ENCODE measurements at regions of chr6 and their contacts with region 1.

Region 1: DNA sequence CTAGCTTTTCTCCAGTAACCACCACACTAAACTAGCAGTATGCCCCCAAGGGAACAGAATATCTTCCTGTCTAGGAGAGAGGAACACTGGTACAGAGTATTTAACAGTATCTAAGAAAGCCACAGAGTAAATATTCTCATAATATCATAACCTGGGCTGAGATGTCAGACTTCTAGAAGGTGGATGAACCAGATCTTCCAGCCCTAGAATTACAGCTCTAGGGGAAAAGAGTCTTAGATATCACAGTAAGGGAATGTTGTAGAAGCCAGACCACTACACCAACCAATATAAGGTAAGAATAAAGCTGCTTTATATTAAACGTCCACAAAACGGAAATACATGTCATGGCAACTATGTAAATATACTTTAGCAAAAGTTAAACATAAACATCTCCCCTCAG is 12.4 kb downstream of the SERINC1 start:
- DNase-seq: no peak
- ATAC-seq: no peak
- H3K4me3 ChIP-seq: no peak overlapping the region
- H3K4me3 Mint-ChIP-seq: peak overlapping the region; percentile 32
- H3K27ac ChIP-seq: no peak overlapping the region
- H3K27ac Mint-ChIP-seq: peak overlapping the region; percentile 60
- H3K4me1 ChIP-seq: peaks cover 53% of the 10 kb centered on the region
- H3K4me1 Mint-ChIP-seq: peaks cover 86% of the 10 kb centered on the region
- H3K27me3 ChIP-seq: no peaks in the 10 kb centered on the region
- H3K27me3 Mint-ChIP-seq: no peaks in the 10 kb centered on the region
- CTCF ChIP-seq: no peak

Region 2: DNA sequence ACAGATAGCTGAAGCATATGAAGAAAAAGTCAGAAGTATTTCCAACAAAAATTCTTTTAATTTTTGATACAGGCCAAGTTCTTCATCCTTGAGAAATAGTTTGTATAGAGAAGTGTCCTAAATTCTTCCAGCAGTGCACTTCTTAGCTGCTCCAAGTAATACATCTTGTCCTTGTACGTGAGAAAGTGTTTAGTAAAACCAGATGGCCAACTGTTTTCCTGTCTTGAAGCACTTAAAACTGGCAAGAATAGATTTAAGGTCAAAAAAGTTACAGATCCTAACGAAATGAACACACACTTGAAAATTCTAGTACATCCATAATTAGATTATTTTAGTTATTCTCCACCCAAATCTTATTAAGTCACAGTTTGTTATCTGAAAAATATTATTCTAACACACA is 111.9 kb before region 1 on chr6:
- CTCF ChIA-PET with region 1: no interaction called
- POLR2A ChIA-PET with region 1: no interaction called
- intact Hi-C with region 1: no loop called
- DNase-seq: no peak
- ATAC-seq: no peak
- H3K4me3 ChIP-seq: no peak overlapping the region
- H3K4me3 Mint-ChIP-seq: no peak overlapping the region
- H3K27ac ChIP-seq: no peak overlapping the region
- H3K27ac Mint-ChIP-seq: no peak overlapping the region
- H3K4me1 ChIP-seq: no peaks in the 10 kb centered on the region
- H3K4me1 Mint-ChIP-seq: no peaks in the 10 kb centered on the region
- H3K27me3 ChIP-seq: no peaks in the 10 kb centered on the region
- H3K27me3 Mint-ChIP-seq: peaks cover 19% of the 10 kb centered on the region
- CTCF ChIP-seq: no peak

Region 3: DNA sequence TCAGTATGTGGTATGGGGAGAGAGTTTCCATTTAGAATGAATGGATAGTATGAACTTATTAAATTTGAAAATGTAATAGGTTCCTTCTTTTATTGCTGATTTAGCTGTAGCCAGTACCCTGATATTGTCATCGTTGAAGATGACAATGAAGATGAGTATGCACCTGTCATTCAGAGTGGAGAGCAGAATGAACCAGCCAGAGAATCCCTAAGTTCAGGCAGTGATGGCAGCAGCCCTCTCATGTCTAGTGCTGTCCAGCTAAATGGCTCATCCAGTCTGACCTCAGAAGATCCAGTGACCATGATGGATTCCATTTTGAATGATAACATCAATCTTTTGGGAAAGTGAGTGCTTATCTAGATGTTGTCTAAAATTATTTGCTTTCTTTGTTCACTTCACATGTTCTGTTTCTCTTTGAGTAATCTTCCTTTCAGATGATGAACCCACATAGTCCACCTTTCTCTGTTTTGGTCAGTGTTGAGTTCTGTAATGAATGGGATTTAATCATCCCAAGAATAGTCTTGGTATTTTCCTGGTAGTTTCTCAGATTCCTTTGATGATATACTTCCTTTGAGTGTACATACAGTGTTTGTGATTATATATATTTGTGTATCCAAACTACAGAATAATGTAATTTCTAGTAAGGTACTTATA is 36.5 kb before region 1 on chr6:
- CTCF ChIA-PET with region 1: no interaction called
- POLR2A ChIA-PET with region 1: interaction called, 3 read pairs
- intact Hi-C with region 1: loop called in 1 of 2 experiments (anchors 5 kb)
- DNase-seq: no peak
- ATAC-seq: no peak
- H3K4me3 ChIP-seq: no peak overlapping the region
- H3K4me3 Mint-ChIP-seq: no peak overlapping the region
- H3K27ac ChIP-seq: no peak overlapping the region
- H3K27ac Mint-ChIP-seq: no peak overlapping the region
- H3K4me1 ChIP-seq: no peaks in the 10 kb centered on the region
- H3K4me1 Mint-ChIP-seq: no peaks in the 10 kb centered on the region
- H3K27me3 ChIP-seq: no peaks in the 10 kb centered on the region
- H3K27me3 Mint-ChIP-seq: no peaks in the 10 kb centered on the region
- CTCF ChIP-seq: no peak

Region 4: DNA sequence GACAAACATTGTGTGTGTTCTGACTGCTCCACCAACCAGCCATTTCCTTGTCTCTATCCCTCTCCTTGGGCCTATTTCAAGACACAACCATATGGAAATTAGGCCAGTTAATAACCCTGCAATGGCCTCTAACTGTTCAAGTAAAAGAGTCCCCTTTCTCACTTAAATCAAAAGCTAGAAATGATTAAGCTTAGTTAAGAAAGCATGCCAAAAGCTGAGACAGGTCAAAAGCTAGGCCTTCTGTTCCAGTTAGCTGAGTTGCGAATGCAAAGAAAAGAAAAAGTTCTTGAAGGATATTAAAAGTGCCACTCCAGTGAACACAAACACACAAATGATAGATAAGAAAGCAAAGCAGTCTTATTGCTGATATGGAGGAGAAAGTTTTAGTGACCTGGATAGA is 10.1 kb before region 1 on chr6:
- CTCF ChIA-PET with region 1: interaction called, 3 read pairs
- POLR2A ChIA-PET with region 1: no interaction called
- intact Hi-C with region 1: loop called in 1 of 2 experiments (anchors 1 kb)
- DNase-seq: no peak
- ATAC-seq: no peak
- H3K4me3 ChIP-seq: no peak overlapping the region
- H3K4me3 Mint-ChIP-seq: no peak overlapping the region
- H3K27ac ChIP-seq: no peak overlapping the region
- H3K27ac Mint-ChIP-seq: peak overlapping the region; percentile 45
- H3K4me1 ChIP-seq: no peaks in the 10 kb centered on the region
- H3K4me1 Mint-ChIP-seq: peaks cover 30% of the 10 kb centered on the region
- H3K27me3 ChIP-seq: no peaks in the 10 kb centered on the region
- H3K27me3 Mint-ChIP-seq: no peaks in the 10 kb centered on the region
- CTCF ChIP-seq: no peak

Measured in CD8-positive, alpha-beta T cell (primary cell).